AG04449 (cell line): ENCODE measurements at regions of chr18 and their contacts with region 1.

Region 1: GRCh38 chr18:50819728-50820378 is at the start of gene MRO:
- DNase-seq: peak; percentile 5
- H3K4me3 ChIP-seq: peak within 1 kb of the TSS; percentile 52
- CTCF ChIP-seq: peak; percentile 96

Region 2: DNA sequence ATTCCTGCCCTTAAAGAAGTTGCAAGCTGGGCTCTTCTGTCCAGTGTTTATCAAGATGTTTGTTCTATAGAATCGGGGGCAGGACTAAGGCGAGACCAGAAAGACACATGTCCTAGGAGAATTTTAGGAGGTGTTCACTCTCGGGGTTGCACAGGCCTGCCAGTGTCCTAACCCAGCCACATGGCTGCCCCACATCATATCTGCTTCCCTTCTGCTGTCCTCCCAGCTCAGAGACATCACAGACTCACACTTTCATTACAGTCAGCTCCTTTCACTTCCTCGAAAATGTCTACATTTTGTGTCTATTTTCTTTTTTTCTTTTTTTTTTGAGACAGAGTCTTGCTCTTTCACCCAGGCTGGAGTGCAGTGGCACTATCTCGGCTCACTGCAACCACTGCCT is 10.7 kb after region 1 on chr18:
- CTCF ChIA-PET with region 1: interaction called, 35 read pairs
- POLR2A ChIA-PET with region 1: no interaction called
- DNase-seq: no peak
- H3K4me3 ChIP-seq: no peak overlapping the region
- CTCF ChIP-seq: no peak

Region 3: GRCh38 chr18:50839996-50840395 is 20.1 kb after region 1 on chr18:
- CTCF ChIA-PET with region 1: interaction called, 35 read pairs
- POLR2A ChIA-PET with region 1: no interaction called
- DNase-seq: no peak
- H3K4me3 ChIP-seq: no peak overlapping the region
- CTCF ChIP-seq: no peak

Region 4: DNA sequence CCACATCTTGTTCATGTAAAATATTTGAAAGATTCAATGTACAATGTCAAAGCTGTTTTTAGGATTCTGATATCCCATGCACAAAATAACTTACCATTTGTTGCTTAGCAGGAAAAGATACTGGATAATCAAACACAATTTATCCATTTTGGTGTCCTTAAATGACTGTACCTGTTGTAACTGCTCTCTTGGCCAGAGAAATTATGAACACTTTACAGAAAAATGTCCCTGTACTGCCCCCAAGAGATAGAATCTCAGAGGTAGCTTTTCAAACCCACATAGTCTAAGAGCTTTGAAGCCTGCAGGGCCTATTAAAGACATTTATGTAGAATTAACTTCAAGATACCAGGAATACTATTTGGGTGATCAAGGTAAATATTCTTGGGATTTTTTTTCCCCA is 46.9 kb after region 1 on chr18:
- CTCF ChIA-PET with region 1: interaction called, 10 read pairs
- POLR2A ChIA-PET with region 1: interaction called, 5 read pairs
- DNase-seq: no peak
- H3K4me3 ChIP-seq: no peak overlapping the region
- CTCF ChIP-seq: no peak